ENCODE measurements at regions of chr6 and their contacts with region 1.

Region 1: DNA sequence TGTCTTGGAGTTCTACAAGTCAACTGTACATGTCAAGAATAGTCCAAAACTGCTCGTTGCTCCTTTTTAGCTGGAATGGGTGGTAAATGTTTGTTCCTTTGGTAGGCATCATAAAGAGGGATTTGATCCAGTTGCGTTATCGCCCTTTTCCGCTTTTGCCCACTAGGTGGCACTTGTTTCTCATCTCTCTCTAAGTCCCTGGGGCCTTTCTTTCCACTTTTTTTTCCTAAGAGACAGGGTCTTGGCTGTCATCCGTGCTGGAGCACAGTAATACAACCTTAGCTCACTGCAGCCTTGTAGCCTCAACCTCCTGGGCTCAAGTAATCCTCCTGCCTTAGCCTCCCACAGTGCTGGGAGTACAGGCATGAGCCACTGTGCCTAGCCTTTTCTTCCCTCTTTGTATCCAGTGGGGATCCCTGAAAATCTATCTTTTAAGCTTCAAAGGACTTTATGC is 20.7 kb downstream of the GTPBP2 start:
- DNase-seq: peak; percentile 82
- ATAC-seq: peak; percentile 45
- H3K4me3 Mint-ChIP-seq: no peak overlapping the region
- H3K27ac Mint-ChIP-seq: no peak overlapping the region
- H3K4me1 Mint-ChIP-seq: peaks cover 2% of the 10 kb centered on the region
- H3K27me3 Mint-ChIP-seq: no peaks in the 10 kb centered on the region
- CTCF ChIP-seq: peak; percentile 75

Region 2: GRCh38 chr6:43059168-43060033 is 548.9 kb before region 1 on chr6 and contains the starts of genes KLC4 and MRPL2:
- CTCF ChIA-PET with region 1: no interaction called
- POLR2A ChIA-PET with region 1: no interaction called
- intact Hi-C with region 1: no loop called
- DNase-seq: peak; percentile 99
- ATAC-seq: peak; percentile 98
- H3K4me3 Mint-ChIP-seq: peak within 1 kb of the TSS; percentile 81
- H3K27ac Mint-ChIP-seq: peak within 1 kb of the TSS; percentile 92
- H3K4me1 Mint-ChIP-seq: peaks cover 37% of the 10 kb centered on the region
- H3K27me3 Mint-ChIP-seq: no peaks in the 10 kb centered on the region
- CTCF ChIP-seq: no peak
- total RNA-seq, gene KLC4: 10.6 to 11.5 TPM
- total RNA-seq, gene MRPL2: 108 TPM

Region 3: DNA sequence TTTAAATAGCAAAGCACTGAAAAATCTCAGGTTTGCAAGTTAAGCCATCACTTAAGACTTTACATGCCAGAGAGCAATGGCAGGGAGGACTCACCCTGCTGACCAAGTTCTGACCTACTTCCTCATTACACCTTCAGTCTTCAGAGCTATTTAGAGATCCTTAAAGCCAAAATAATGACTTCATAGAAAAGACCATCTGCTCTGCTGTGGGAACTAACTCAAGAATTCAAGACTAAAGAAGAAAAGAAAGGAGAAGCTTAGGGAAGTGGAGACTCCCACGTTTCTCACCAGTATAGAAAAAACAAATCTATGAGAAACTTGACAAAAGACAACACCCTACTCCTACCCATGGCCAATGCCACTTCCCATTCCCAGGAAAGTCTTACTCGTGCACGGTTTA is 61.1 kb before region 1 on chr6:
- CTCF ChIA-PET with region 1: interaction called, 16 read pairs
- POLR2A ChIA-PET with region 1: interaction called, 3 read pairs
- intact Hi-C with region 1: no loop called
- DNase-seq: no peak
- ATAC-seq: no peak
- H3K4me3 Mint-ChIP-seq: no peak overlapping the region
- H3K27ac Mint-ChIP-seq: no peak overlapping the region
- H3K4me1 Mint-ChIP-seq: no peaks in the 10 kb centered on the region
- H3K27me3 Mint-ChIP-seq: no peaks in the 10 kb centered on the region
- CTCF ChIP-seq: no peak

Region 4: DNA sequence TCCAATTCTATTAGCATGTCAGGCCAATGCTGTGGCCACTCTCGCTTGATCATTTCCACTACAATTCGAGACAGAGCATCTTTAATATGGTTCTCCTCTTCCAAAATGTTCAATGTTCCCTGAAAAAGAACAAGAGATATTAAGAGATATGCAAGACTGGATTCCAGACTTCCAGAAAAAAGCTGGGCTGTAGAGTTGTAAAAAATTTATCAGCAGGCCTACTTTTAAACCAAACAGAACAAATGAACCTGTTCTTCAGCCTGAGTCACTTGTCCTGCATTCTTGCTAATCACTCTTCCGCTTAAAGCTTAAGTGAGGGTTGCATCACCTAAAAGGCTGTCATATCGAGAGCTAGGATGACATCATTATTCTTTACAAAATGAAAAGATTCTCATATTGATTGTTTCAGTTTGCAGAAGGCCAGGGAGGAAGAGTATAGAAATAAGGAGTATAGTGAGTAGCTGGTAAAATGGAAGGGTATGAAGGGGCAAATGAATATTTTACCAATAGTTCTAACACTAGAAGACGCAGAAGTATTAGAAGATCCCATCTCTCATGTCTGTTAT is 37.4 kb before region 1 on chr6:
- CTCF ChIA-PET with region 1: interaction called, 16 read pairs
- POLR2A ChIA-PET with region 1: interaction called, 4 read pairs
- intact Hi-C with region 1: no loop called
- DNase-seq: peak; percentile 10
- ATAC-seq: peak; percentile 45
- H3K4me3 Mint-ChIP-seq: no peak overlapping the region
- H3K27ac Mint-ChIP-seq: peak overlapping the region; percentile 90
- H3K4me1 Mint-ChIP-seq: peaks cover 26% of the 10 kb centered on the region
- H3K27me3 Mint-ChIP-seq: no peaks in the 10 kb centered on the region
- CTCF ChIP-seq: no peak

Region 5: DNA sequence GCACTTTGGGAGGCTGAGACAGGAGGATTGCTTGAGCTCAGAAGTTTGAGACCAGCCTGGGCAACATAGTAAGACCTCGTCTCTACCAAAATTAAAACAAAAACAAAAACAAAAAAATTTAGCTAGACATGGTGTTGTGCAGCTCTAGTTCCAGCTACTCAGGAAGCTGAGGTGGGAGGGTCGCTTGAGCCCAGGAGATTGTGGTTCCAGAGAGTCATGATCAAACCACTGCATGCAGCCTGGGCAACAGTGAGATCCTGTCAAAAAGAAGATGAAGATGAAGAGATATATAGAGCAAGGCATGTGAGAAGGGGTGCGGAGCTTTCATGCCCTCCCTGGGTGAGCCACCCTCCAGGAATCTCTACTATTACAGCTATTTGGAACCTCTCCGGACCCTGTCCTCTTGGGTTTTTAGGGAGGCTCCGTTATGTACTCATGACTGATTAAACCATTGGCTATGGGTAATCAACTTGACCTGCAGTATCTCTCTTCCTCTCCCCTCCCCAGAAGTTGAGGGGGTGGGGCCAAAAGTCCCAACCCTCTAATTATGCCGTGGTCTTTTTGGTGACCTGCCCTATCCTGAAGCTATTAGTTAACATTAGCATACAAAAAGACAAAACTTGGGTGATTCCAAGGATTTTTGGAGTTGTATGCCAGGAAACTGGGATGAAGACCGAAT is 23.3 kb before region 1 on chr6:
- CTCF ChIA-PET with region 1: interaction called, 26 read pairs
- POLR2A ChIA-PET with region 1: no interaction called
- intact Hi-C with region 1: no loop called
- DNase-seq: peak; percentile 18
- ATAC-seq: peak; percentile 53
- H3K4me3 Mint-ChIP-seq: no peak overlapping the region
- H3K27ac Mint-ChIP-seq: peak overlapping the region; percentile 47
- H3K4me1 Mint-ChIP-seq: peaks cover 25% of the 10 kb centered on the region
- H3K27me3 Mint-ChIP-seq: no peaks in the 10 kb centered on the region
- CTCF ChIP-seq: no peak

Region 6: GRCh38 chr6:43621429-43622180 is 13.3 kb after region 1 on chr6:
- CTCF ChIA-PET with region 1: interaction called, 33 read pairs
- POLR2A ChIA-PET with region 1: interaction called, 4 read pairs
- intact Hi-C with region 1: no loop called
- DNase-seq: no peak
- ATAC-seq: no peak
- H3K4me3 Mint-ChIP-seq: no peak overlapping the region
- H3K27ac Mint-ChIP-seq: no peak overlapping the region
- H3K4me1 Mint-ChIP-seq: no peaks in the 10 kb centered on the region
- H3K27me3 Mint-ChIP-seq: no peaks in the 10 kb centered on the region
- CTCF ChIP-seq: no peak

Region 7: DNA sequence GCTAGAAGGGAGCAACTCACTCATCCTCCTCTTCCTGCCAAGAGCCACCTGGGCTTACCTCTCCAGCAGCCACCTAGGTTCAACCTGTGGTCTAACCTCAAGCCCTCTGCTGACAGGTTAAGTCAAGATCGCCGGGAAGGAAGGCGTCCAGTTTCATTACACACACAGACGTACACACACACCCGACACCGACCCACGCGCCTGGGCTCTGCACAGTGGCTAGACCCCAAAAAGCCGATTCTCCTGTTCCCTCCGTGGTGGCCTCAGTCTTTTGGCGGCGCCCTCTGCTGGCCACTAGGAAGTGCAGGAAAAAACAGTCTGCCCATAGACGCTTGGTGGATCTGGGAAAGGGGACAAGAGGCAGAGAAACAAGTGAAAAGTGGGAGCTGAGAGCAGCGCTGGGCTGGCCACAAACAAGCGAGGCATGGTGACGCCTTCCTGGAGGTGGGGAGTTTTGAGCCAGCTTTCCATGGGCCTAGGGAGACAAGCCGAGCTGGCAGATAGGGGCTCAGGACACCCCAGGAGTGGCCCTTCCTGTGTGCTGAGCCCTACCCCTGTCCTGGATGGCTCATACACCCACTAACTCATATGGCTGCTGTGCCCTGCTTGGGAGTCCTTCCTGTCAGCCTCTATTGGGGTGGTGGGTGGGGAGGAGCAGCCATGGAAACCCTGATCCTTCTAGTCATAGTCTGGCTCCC is 466.3 kb after region 1 on chr6:
- CTCF ChIA-PET with region 1: interaction called, 17 read pairs
- POLR2A ChIA-PET with region 1: no interaction called
- intact Hi-C with region 1: no loop called
- DNase-seq: peak; percentile 96
- ATAC-seq: peak; percentile 71
- H3K4me3 Mint-ChIP-seq: peak overlapping the region; percentile 98
- H3K27ac Mint-ChIP-seq: peak overlapping the region; percentile 90
- H3K4me1 Mint-ChIP-seq: peaks cover 25% of the 10 kb centered on the region
- H3K27me3 Mint-ChIP-seq: peaks cover 16% of the 10 kb centered on the region
- CTCF ChIP-seq: peak; percentile 89